ENCODE measurements at regions of chr22 and their contacts with region 1.

Region 1: GRCh38 chr22:36387752-36388518 is at the start of gene MYH9:
- DNase-seq: peak; percentile 100
- H3K4me3 ChIP-seq: peak within 1 kb of the TSS; percentile 73 to 100 (median 92)
- H3K27ac ChIP-seq: peak within 1 kb of the TSS; percentile 93 to 100 (median 98)
- H3K4me1 ChIP-seq: peaks cover 30 to 71% (median 61%) of the 10 kb centered on the region in 6 donors
- H3K27me3 ChIP-seq: no peaks in the 10 kb centered on the region
- CTCF ChIP-seq: peak in 4 of 11 experiments; percentile 12 to 44 (median 20)
- POLR2A ChIP-seq: peak; percentile 70 to 96 (median 88)
- total RNA-seq, gene MYH9: 575 to 1,376 (median 1,013) TPM

Region 2: GRCh38 chr22:36331306-36331911 is 56.5 kb before region 1 on chr22:
- intact Hi-C with region 1: loop called (anchors 10 kb)
- DNase-seq: peak; percentile 97
- H3K4me3 ChIP-seq: peak overlapping the region in 6 of 8 donors; percentile 4 to 59 (median 19)
- H3K27ac ChIP-seq: peak overlapping the region; percentile 89 to 97 (median 94)
- H3K4me1 ChIP-seq: peaks cover 96 to 100% (median 100%) of the 10 kb centered on the region in 6 donors
- H3K27me3 ChIP-seq: no peaks in the 10 kb centered on the region
- CTCF ChIP-seq: peak in 2 of 11 experiments; percentile 9 to 19
- POLR2A ChIP-seq: no peak

Region 3: GRCh38 chr22:36454916-36455570 is 67.1 kb after region 1 on chr22:
- intact Hi-C with region 1: loop called (anchors 5 kb)
- DNase-seq: peak; percentile 100
- H3K4me3 ChIP-seq: peak overlapping the region; percentile 19 to 71 (median 46)
- H3K27ac ChIP-seq: peak overlapping the region; percentile 76 to 98 (median 96)
- H3K4me1 ChIP-seq: peaks cover 51 to 89% (median 79%) of the 10 kb centered on the region in 6 donors
- H3K27me3 ChIP-seq: no peaks in the 10 kb centered on the region
- CTCF ChIP-seq: peak in 5 of 11 experiments; percentile 40 to 70 (median 62)
- POLR2A ChIP-seq: peak in 1 of 3 donors; percentile 62

Region 4: GRCh38 chr22:36520423-36520822 is 132.5 kb after region 1 on chr22:
- intact Hi-C with region 1: no loop called
- DNase-seq: no peak
- H3K4me3 ChIP-seq: no peak overlapping the region
- H3K27ac ChIP-seq: peak overlapping the region in 4 of 8 donors; percentile 15 to 54 (median 46)
- H3K4me1 ChIP-seq: peaks cover 0 to 25% (median 7%) of the 10 kb centered on the region in 6 donors
- H3K27me3 ChIP-seq: no peaks in the 10 kb centered on the region
- CTCF ChIP-seq: no peak
- POLR2A ChIP-seq: no peak